Calu3 (cell line): ENCODE measurements at regions of chr3 and their contacts with region 1.

Region 1: GRCh38 chr3:79497447-79498111 is 270.2 kb downstream of the ROBO1 start:
- DNase-seq: no peak
- H3K4me3 Mint-ChIP-seq: no peak overlapping the region
- H3K27ac Mint-ChIP-seq: no peak overlapping the region
- H3K4me1 Mint-ChIP-seq: no peaks in the 10 kb centered on the region
- H3K27me3 Mint-ChIP-seq: no peaks in the 10 kb centered on the region
- CTCF ChIP-seq: peak; percentile 23

Region 2: GRCh38 chr3:79086514-79086913 is 411.1 kb before region 1 on chr3:
- CTCF ChIA-PET with region 1: no interaction called
- intact Hi-C with region 1: loop called (anchors 2 kb)
- DNase-seq: peak; percentile 60
- H3K4me3 Mint-ChIP-seq: no peak overlapping the region
- H3K27ac Mint-ChIP-seq: no peak overlapping the region
- H3K4me1 Mint-ChIP-seq: no peaks in the 10 kb centered on the region
- H3K27me3 Mint-ChIP-seq: no peaks in the 10 kb centered on the region
- CTCF ChIP-seq: peak; percentile 58